GM10248 (cell line): ENCODE measurements at regions of chr2 and their contacts with region 1.

Region 1: DNA sequence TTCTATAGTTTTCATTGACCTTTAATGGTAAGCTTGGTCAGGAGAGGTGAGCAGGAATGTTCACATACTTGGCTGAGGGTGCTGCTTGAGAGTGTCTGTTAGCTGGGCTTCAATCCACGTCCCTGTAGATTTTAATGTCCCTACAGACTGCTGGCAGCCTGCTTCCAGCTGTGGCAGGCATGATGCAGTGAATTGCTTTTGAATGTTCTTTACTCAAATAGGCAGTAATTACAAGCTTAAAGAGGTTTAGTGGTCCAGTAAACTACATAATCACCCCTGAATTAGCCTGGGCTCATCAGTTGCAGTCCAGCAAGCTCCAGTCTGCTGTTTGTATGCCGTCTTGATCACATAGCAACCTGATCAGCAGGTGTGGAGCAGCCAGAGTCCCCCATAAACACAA is 102.1 kb downstream of the MEIS1 start:
- DNase-seq: no peak
- CTCF ChIP-seq: no peak

Region 2: GRCh38 chr2:66526180-66526579 is 10.8 kb before region 1 on chr2:
- CTCF ChIA-PET with region 1: interaction called, 13 read pairs
- POLR2A ChIA-PET with region 1: no interaction called
- DNase-seq: no peak
- CTCF ChIP-seq: no peak

Region 3: GRCh38 chr2:66547887-66548286 is 10.9 kb after region 1 on chr2:
- CTCF ChIA-PET with region 1: interaction called, 10 read pairs
- POLR2A ChIA-PET with region 1: no interaction called
- DNase-seq: no peak
- CTCF ChIP-seq: no peak

Region 4: GRCh38 chr2:66574701-66575624 is 38.0 kb after region 1 on chr2:
- CTCF ChIA-PET with region 1: no interaction called
- POLR2A ChIA-PET with region 1: no interaction called
- DNase-seq: peak; percentile 29
- CTCF ChIP-seq: peak; percentile 16